Endothelial cell of umbilical vein (primary cell): ENCODE measurements at regions of chr1 and their contacts with region 1.

Region 1: GRCh38 chr1:43473463-43473862 is 19.7 kb upstream of the HYI start:
- DNase-seq: peak; percentile 46
- H3K4me3 ChIP-seq: peak overlapping the region in 1 of 3 experiments; percentile 53
- H3K27ac ChIP-seq: peak overlapping the region; percentile 100
- H3K4me1 ChIP-seq: peaks cover 60% of the 10 kb centered on the region
- H3K27me3 ChIP-seq: no peaks in the 10 kb centered on the region
- CTCF ChIP-seq: no peak
- POLR2A ChIP-seq: no peak

Region 2: GRCh38 chr1:43067977-43068751 is 405.3 kb before region 1 on chr1:
- CTCF ChIA-PET with region 1: no interaction called
- POLR2A ChIA-PET with region 1: no interaction called
- dilution Hi-C with region 1: no loop called
- intact Hi-C with region 1: no loop called
- DNase-seq: no peak
- H3K4me3 ChIP-seq: peak overlapping the region in 1 of 3 experiments; percentile 39
- H3K27ac ChIP-seq: no peak overlapping the region
- H3K4me1 ChIP-seq: no peaks in the 10 kb centered on the region
- H3K27me3 ChIP-seq: no peaks in the 10 kb centered on the region
- CTCF ChIP-seq: no peak
- POLR2A ChIP-seq: no peak

Region 3: DNA sequence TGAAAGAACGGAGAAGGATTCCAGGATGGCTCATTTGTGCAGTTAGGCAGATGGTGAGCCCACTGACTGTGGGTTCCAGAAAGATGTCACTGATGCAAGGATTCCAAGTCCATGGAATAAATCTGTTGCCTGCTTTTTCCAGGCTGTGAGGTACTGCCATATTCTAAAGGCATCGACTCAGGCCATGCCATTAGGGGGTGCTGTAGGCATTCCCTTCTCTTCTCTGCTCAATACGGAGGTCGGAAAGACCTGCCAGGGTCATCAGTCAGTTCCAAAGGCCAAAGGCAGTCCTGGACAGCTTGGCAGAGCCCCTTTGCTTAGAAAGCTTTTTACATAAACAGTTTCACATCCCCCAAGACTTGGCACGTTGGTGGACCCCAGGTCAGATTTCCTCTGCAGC is 235.4 kb before region 1 on chr1:
- CTCF ChIA-PET with region 1: no interaction called
- POLR2A ChIA-PET with region 1: no interaction called
- dilution Hi-C with region 1: no loop called
- intact Hi-C with region 1: loop called (anchors 1 kb)
- DNase-seq: peak; percentile 77
- H3K4me3 ChIP-seq: no peak overlapping the region
- H3K27ac ChIP-seq: no peak overlapping the region
- H3K4me1 ChIP-seq: peaks cover 6% of the 10 kb centered on the region
- H3K27me3 ChIP-seq: no peaks in the 10 kb centered on the region
- CTCF ChIP-seq: peak; percentile 81 to 86
- POLR2A ChIP-seq: no peak

Region 4: GRCh38 chr1:43421976-43422750 is 51.3 kb before region 1 on chr1:
- CTCF ChIA-PET with region 1: no interaction called
- POLR2A ChIA-PET with region 1: no interaction called
- dilution Hi-C with region 1: no loop called
- intact Hi-C with region 1: no loop called
- DNase-seq: no peak
- H3K4me3 ChIP-seq: no peak overlapping the region
- H3K27ac ChIP-seq: no peak overlapping the region
- H3K4me1 ChIP-seq: no peaks in the 10 kb centered on the region
- H3K27me3 ChIP-seq: no peaks in the 10 kb centered on the region
- CTCF ChIP-seq: no peak
- POLR2A ChIP-seq: no peak

Region 5: DNA sequence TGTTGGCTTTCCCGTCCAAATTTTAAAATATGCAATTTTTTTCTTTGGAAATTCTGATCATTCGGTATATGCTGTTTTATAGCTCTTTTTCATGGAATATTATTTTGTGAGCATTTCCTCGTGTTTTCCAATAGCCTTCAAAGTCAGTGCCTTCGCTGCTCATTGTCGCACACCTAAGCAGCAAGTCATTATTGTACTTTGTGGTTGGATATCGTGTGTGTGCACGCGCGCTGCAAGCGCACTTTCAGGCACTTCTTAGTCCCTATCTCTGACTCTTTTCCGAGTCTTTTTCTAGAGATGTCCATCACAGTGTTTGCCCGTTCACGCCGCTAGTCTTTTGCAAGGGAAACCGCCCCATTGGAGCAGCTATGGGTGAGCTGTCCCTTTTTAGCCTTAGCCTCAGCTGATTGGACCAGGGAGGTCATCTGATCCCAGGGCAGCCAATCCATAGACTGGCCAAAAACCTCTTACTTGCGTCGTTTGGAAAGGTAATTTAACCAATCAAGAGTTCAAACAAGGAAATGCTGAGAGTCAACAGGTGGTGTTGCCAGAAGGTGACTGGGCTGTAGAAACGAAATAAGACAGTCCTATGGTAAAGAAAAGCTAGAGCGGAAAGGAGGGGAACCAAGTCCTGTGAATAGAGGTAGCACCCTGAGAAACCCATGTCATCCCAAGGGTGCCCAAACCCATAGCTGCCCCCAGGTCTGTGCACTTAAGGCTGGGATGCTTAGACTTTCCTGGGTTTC is 19.0 kb before region 1 on chr1:
- CTCF ChIA-PET with region 1: interaction called, 6 read pairs
- POLR2A ChIA-PET with region 1: interaction called, 7 read pairs
- dilution Hi-C with region 1: no loop called
- intact Hi-C with region 1: loop called (anchors 1 kb)
- DNase-seq: peak; percentile 86
- H3K4me3 ChIP-seq: peak overlapping the region; percentile 19 to 72 (median 67)
- H3K27ac ChIP-seq: peak overlapping the region; percentile 55
- H3K4me1 ChIP-seq: peaks cover 43% of the 10 kb centered on the region
- H3K27me3 ChIP-seq: no peaks in the 10 kb centered on the region
- CTCF ChIP-seq: no peak
- POLR2A ChIP-seq: peak; percentile 88

Region 6: GRCh38 chr1:43509723-43510375 is 36.4 kb after region 1 on chr1:
- CTCF ChIA-PET with region 1: no interaction called
- POLR2A ChIA-PET with region 1: no interaction called
- dilution Hi-C with region 1: no loop called
- intact Hi-C with region 1: no loop called
- DNase-seq: no peak
- H3K4me3 ChIP-seq: no peak overlapping the region
- H3K27ac ChIP-seq: no peak overlapping the region
- H3K4me1 ChIP-seq: no peaks in the 10 kb centered on the region
- H3K27me3 ChIP-seq: no peaks in the 10 kb centered on the region
- CTCF ChIP-seq: no peak
- POLR2A ChIP-seq: no peak

Region 7: DNA sequence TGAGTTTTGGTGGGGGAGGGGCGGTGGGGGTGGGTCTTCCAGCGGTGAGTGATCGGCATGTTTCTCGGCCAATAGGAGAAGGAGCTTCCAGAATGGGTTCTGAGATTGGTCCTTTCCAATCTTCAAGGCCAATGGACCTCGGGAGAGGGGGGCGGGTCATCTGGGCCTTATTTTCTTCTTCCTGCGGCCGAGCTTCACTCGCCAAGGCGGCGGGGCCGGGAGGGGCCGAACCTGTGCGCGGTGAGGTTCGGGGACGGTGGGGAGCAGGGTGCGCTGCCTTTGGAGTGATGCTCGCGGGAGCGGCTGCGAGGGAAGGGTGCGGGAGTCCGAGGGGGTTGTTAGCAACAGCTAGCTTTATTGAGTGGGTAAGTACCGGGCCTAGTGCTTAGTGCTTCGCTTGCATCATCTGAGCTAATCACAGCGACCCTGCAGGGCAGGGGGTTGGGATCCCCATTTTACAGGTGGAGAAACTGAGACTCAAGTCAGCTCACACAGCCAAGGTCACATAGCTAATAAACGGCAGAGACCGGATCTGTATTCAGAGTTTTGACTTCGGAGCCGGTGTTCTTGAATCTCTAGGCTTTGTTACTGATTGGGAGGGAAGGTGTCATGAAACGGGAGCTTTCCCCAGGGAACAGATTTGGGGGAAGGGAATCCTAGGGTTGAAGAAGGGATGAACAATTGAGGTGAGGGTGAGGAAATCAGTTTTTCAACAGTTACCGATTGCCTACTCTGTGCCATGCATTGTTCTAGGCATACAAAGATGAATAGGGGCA is 177.0 kb after region 1 on chr1:
- CTCF ChIA-PET with region 1: no interaction called
- POLR2A ChIA-PET with region 1: no interaction called
- dilution Hi-C with region 1: no loop called
- intact Hi-C with region 1: loop called (anchors 1 kb)
- DNase-seq: peak; percentile 94
- H3K4me3 ChIP-seq: peak overlapping the region; percentile 60 to 95 (median 65)
- H3K27ac ChIP-seq: peak overlapping the region; percentile 63
- H3K4me1 ChIP-seq: peaks cover 16% of the 10 kb centered on the region
- H3K27me3 ChIP-seq: peaks cover under 1 to 1% of the 10 kb centered on the region in 2 experiments
- CTCF ChIP-seq: no peak
- POLR2A ChIP-seq: peak; percentile 99